ENCODE measurements at regions of chr19 and their contacts with region 1.

Region 1: DNA sequence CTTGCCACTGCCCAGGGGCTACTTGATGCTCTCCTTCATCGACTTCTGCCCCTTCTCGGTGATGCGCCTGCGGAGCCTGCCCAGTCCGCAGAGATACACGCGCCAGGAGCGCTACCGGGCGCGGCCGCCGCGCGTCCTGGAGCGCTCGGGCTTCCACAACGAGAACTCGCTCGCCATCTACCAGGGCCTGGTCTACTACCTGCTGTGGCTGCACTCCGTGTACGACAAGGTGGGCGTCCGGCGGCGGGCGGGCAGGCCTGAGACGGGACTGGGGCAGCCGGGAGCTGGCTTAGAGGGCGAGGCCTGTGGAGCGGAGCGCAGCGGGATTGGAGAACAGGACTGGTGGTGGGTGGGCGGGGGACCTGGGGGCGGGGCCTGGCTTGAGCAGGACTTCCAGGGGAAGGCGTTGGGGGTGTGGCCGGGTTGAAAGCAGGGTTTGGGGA is 12.7 kb upstream of the PSMD8 start:
- DNase-seq: peak; percentile 37 to 72 (median 48)
- H3K4me3 ChIP-seq: peak overlapping the region; percentile 66
- H3K4me3 Mint-ChIP-seq: peak overlapping the region; percentile 69 to 93 (median 84)
- H3K27ac ChIP-seq: no peak overlapping the region
- H3K27ac Mint-ChIP-seq: peak overlapping the region in 1 of 8 donors; percentile 52
- H3K4me1 ChIP-seq: peaks cover 12% of the 10 kb centered on the region
- H3K4me1 Mint-ChIP-seq: peaks cover 8 to 22% (median 13%) of the 10 kb centered on the region in 3 donors
- H3K27me3 ChIP-seq: no peaks in the 10 kb centered on the region
- H3K27me3 Mint-ChIP-seq: peaks cover 3 to 7% of the 10 kb centered on the region in 2 donors

Region 2: GRCh38 chr19:38394488-38394887 is 32.8 kb after region 1 on chr19:
- CTCF ChIA-PET with region 1: no interaction called
- POLR2A ChIA-PET with region 1: interaction called, 11 read pairs
- DNase-seq: peak; percentile 37 to 77 (median 46)
- H3K4me3 ChIP-seq: peak overlapping the region; percentile 45
- H3K4me3 Mint-ChIP-seq: peak overlapping the region; percentile 56 to 87 (median 71)
- H3K27ac ChIP-seq: no peak overlapping the region
- H3K27ac Mint-ChIP-seq: peak overlapping the region in 4 of 8 donors; percentile 57 to 81 (median 62)
- H3K4me1 ChIP-seq: peaks cover 15% of the 10 kb centered on the region
- H3K4me1 Mint-ChIP-seq: peaks cover 24 to 26% (median 24%) of the 10 kb centered on the region in 3 donors
- H3K27me3 ChIP-seq: no peaks in the 10 kb centered on the region
- H3K27me3 Mint-ChIP-seq: peaks cover 2 to 3% of the 10 kb centered on the region in 2 donors

Measured in CD8-positive, alpha-beta memory T cell (primary cell).